ENCODE measurements at regions of chr2 and their contacts with region 1.

Region 1: DNA sequence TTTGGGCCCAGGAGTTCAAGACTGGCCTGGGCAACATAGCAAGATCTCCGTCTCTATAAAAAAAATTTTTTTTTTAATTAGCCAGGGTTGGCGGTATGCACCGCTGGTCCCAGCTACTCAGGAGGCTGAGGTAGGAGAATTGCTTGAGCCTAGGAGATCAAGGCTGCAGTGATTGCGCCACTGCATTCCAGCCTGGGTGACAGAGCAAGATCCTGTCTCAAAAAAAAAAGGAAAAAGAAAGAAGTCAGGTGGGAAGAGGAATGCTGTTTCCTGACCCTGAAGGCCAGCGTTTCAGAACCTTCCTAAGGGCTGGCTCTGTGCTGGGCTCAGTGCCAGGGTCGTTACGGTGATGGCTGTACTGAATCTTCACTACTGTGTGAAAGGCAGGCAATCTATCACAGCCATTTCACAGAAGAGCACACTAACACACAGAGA is 35.0 kb upstream of the AGAP1 start:
- DNase-seq: peak; percentile 93 to 97
- H3K4me3 ChIP-seq: no peak overlapping the region
- H3K27ac ChIP-seq: peak overlapping the region; percentile 43
- H3K4me1 ChIP-seq: peaks cover 22% of the 10 kb centered on the region
- H3K27me3 ChIP-seq: no peaks in the 10 kb centered on the region
- CTCF ChIP-seq: no peak

Region 2: DNA sequence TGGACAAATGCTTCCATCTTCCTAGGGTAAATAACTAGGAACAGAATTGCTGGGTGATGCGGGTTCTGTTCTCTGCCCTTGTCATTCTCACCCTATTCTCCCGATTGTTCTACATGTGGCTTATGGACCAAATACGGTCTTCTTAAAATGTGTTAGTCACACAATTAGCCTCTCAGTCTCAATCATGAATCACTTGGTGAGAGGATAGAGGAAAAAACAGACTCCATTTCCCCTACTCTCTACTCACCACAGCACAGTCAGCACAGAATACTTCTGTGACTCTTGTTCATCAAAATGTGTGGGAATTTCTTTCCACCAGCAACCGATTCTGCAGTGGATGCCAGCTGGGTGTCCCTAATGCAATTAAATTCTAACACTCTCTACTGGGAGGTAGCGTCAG is 381.8 kb before region 1 on chr2:
- CTCF ChIA-PET with region 1: no interaction called
- POLR2A ChIA-PET with region 1: no interaction called
- intact Hi-C with region 1: no loop called
- DNase-seq: no peak
- H3K4me3 ChIP-seq: no peak overlapping the region
- H3K27ac ChIP-seq: no peak overlapping the region
- H3K4me1 ChIP-seq: no peaks in the 10 kb centered on the region
- H3K27me3 ChIP-seq: no peaks in the 10 kb centered on the region
- CTCF ChIP-seq: no peak

Region 3: GRCh38 chr2:235766278-235766677 is 307.4 kb after region 1 on chr2:
- CTCF ChIA-PET with region 1: interaction called, 11 read pairs
- POLR2A ChIA-PET with region 1: no interaction called
- intact Hi-C with region 1: no loop called
- DNase-seq: peak; percentile 81 to 82
- H3K4me3 ChIP-seq: no peak overlapping the region
- H3K27ac ChIP-seq: no peak overlapping the region
- H3K4me1 ChIP-seq: no peaks in the 10 kb centered on the region
- H3K27me3 ChIP-seq: no peaks in the 10 kb centered on the region
- CTCF ChIP-seq: peak; percentile 99